Panc1 (cell line): ENCODE measurements at regions of chr10 and their contacts with region 1.

Region 1: DNA sequence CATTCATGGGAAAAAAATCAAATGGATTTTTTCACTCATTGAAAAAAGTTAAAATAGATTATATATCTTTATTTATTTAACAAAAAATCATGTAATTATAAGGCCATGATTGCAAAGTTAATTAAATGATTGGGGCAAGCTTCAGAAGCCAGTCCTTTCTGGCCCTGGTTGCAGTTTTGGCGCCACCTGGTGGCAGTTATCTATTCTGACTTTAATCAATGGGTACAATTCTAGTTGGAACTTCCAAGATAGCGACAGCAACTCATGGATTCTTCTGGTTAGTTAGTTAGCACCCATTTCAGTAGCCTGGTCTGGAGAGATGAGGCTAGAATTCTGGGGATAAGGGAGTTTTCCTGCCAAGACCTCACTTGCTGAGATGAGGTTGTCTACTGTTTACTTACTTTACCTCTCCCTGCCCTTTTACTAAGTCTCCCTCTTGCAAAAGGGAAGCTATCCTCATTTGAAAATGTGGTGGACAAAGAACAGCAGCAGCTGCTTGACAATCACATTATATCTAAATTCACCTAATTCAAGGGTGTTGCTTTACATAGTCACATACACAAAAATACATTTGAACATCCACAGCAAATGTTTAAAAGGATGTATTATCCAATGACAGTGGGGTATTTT is 42.3 kb downstream of the NOC3L start:
- DNase-seq: peak; percentile 60
- ATAC-seq: peak; percentile 74
- H3K4me3 ChIP-seq: no peak overlapping the region
- H3K27ac ChIP-seq: no peak overlapping the region
- H3K4me1 ChIP-seq: no peaks in the 10 kb centered on the region
- H3K27me3 ChIP-seq: no peaks in the 10 kb centered on the region
- CTCF ChIP-seq: peak; percentile 96

Region 2: GRCh38 chr10:93916257-93917063 is 403.9 kb before region 1 on chr10:
- CTCF ChIA-PET with region 1: interaction called, 23 read pairs
- POLR2A ChIA-PET with region 1: interaction called, 10 read pairs
- in situ Hi-C with region 1: no loop called
- intact Hi-C with region 1: loop called (anchors 2 kb)
- DNase-seq: no peak
- ATAC-seq: peak; percentile 85
- H3K4me3 ChIP-seq: no peak overlapping the region
- H3K27ac ChIP-seq: no peak overlapping the region
- H3K4me1 ChIP-seq: peaks cover 18% of the 10 kb centered on the region
- H3K27me3 ChIP-seq: no peaks in the 10 kb centered on the region
- CTCF ChIP-seq: peak; percentile 76

Region 3: DNA sequence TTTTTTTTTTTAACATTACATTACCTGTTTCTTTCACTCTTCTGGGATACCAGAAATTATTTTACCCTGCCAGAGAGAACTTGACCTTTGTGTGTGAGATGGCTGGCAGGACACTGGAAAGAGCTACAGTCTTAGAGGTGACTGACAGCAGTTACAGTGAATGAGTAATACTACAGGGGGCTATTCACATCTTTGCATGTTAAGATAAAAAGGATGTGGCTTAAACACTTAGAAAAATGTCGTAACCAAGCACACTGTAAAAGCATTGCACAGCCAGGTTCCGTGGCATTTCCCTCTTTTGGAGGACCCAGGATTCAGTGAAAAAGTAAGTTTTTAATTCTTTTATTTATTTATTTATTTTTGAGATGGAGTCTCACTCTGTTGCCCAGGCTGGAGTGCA is 63.1 kb after region 1 on chr10:
- CTCF ChIA-PET with region 1: interaction called, 11 read pairs
- POLR2A ChIA-PET with region 1: no interaction called
- in situ Hi-C with region 1: no loop called
- intact Hi-C with region 1: no loop called
- DNase-seq: no peak
- ATAC-seq: no peak
- H3K4me3 ChIP-seq: no peak overlapping the region
- H3K27ac ChIP-seq: no peak overlapping the region
- H3K4me1 ChIP-seq: no peaks in the 10 kb centered on the region
- H3K27me3 ChIP-seq: no peaks in the 10 kb centered on the region
- CTCF ChIP-seq: no peak

Region 4: GRCh38 chr10:94450782-94451181 is 130.4 kb after region 1 on chr10:
- CTCF ChIA-PET with region 1: no interaction called
- POLR2A ChIA-PET with region 1: no interaction called
- in situ Hi-C with region 1: no loop called
- intact Hi-C with region 1: no loop called
- DNase-seq: no peak
- ATAC-seq: no peak
- H3K4me3 ChIP-seq: no peak overlapping the region
- H3K27ac ChIP-seq: no peak overlapping the region
- H3K4me1 ChIP-seq: no peaks in the 10 kb centered on the region
- H3K27me3 ChIP-seq: no peaks in the 10 kb centered on the region
- CTCF ChIP-seq: no peak

Region 5: GRCh38 chr10:95039274-95039673 is 718.9 kb after region 1 on chr10:
- CTCF ChIA-PET with region 1: no interaction called
- POLR2A ChIA-PET with region 1: no interaction called
- in situ Hi-C with region 1: no loop called
- intact Hi-C with region 1: no loop called
- DNase-seq: no peak
- ATAC-seq: no peak
- H3K4me3 ChIP-seq: no peak overlapping the region
- H3K27ac ChIP-seq: no peak overlapping the region
- H3K4me1 ChIP-seq: no peaks in the 10 kb centered on the region
- H3K27me3 ChIP-seq: peaks cover 10% of the 10 kb centered on the region; the same call in 1 of the 2 replicates
- CTCF ChIP-seq: no peak